Common myeloid progenitor, CD34-positive (primary cell): ENCODE measurements at regions of chr11 and their contacts with region 1.

Region 1: DNA sequence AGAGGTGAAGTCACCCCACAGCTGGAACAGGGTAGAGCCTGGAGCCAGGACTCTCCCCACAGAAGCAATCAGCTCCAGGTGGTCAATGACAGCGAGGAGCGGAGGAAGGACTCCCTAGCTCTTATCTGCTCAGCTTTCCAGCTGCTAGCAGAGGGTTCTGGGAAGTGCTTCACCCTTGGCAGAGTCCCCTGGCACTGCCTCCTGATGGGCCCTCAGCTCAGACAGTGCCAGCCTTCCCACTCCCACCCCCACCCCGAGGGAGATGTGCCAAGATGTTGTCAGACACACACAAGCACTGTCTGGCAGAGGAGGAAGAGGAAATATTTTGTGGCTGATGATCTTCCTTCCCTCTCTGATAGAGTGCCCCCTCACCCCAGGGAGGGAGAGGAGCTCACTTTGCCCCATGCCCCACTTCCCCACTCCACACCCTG is 44.2 kb downstream of the SLCO2B1 start:
- DNase-seq: peak in 1 of 3 donors; percentile 13
- H3K4me3 ChIP-seq: no peak overlapping the region
- H3K27ac ChIP-seq: no peak overlapping the region
- H3K4me1 ChIP-seq: peaks cover 0 to 10% (median 3%) of the 10 kb centered on the region in 4 experiments
- H3K27me3 ChIP-seq: peaks cover 0 to 11% (median 2%) of the 10 kb centered on the region in 5 experiments

Region 2: DNA sequence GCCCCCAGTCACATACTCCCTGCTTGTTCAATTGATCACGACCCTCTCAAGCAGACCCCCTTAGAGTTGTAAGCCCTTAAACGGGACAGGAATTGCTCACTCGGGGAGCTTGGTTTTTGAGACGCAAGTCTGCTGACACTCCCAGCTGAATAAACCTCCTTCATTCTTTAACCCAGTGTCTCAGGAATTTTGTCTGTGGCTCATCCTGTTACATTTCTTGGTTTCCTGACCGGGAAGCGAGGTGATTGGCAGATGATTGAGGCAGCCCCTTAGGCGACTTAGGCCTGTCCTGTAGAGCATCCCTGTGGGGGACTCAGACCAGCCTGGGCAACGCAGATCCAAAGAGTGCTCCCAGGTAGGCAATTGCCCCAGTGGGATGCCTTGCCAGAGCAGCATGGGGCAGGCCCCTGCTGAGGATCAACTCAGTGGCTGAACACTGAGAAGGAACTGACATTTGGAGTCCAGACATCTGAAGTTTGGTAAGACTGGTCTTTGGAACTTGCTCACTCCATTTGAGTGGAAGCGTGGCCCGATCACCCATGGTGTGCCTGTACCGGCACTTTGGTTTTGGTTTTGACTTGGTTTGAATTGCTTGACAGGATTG is 154.9 kb before region 1 on chr11:
- CTCF ChIA-PET with region 1: no interaction called
- POLR2A ChIA-PET with region 1: no interaction called
- DNase-seq: no peak
- H3K4me3 ChIP-seq: no peak overlapping the region
- H3K27ac ChIP-seq: no peak overlapping the region
- H3K4me1 ChIP-seq: no peaks in the 10 kb centered on the region
- H3K27me3 ChIP-seq: no peaks in the 10 kb centered on the region

Region 3: DNA sequence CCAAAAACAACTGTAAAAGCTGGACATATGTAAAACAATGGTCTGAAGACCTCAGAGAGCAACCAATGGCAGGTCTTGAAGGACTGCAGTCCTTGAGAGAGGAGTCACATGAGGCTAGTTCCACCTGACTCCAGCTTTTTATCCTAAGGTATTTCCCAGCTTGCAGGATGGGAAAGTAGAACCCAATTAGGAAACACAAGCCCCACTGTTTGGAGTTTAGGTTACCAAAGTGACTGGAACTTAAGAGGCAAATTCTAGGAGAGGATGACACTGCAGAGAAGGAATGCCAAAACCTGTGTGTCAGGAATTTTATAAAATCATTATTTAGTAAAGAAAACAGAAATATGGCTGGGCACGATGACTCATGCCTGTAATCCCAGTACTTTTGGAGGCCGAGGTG is 116.9 kb before region 1 on chr11:
- CTCF ChIA-PET with region 1: no interaction called
- POLR2A ChIA-PET with region 1: interaction called, 11 read pairs
- DNase-seq: no peak
- H3K4me3 ChIP-seq: no peak overlapping the region
- H3K27ac ChIP-seq: no peak overlapping the region
- H3K4me1 ChIP-seq: no peaks in the 10 kb centered on the region
- H3K27me3 ChIP-seq: peaks cover 0 to 4% (median 0%) of the 10 kb centered on the region in 5 experiments